IMR-90 (cell line): ENCODE measurements at regions of chr9 and their contacts with region 1.

Region 1: GRCh38 chr9:2645569-2645968 is 24.0 kb downstream of the VLDLR start:
- DNase-seq: no peak
- ATAC-seq: no peak
- H3K4me3 ChIP-seq: no peak overlapping the region
- H3K27ac ChIP-seq: no peak overlapping the region
- H3K4me1 ChIP-seq: no peaks in the 10 kb centered on the region
- H3K27me3 ChIP-seq: no peaks in the 10 kb centered on the region
- CTCF ChIP-seq: no peak
- POLR2A ChIP-seq: no peak
- RAD21 ChIP-seq: no peak

Region 2: DNA sequence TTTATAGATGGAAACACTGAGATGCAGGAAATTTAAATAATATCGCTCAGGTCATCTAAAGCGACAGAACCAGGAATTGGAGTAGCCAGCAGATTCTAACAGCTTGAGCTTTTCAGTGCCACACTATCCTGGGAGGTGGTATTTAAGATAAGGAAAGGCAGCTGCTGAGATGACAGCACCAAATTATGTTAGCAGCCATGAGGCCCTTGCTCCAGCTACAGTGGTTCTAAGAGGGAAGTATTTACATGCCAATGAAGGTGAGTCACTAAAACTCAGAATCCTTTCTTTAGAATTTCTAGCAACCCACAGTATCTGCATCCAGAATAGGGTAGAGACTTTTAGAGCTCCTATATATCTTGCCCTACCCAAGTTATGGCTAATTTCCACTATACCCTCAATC is 151.0 kb before region 1 on chr9:
- CTCF ChIA-PET with region 1: no interaction called
- POLR2A ChIA-PET with region 1: no interaction called
- dilution Hi-C with region 1: no loop called
- in situ Hi-C with region 1: no loop called
- intact Hi-C with region 1: no loop called
- DNase-seq: peak; percentile 88
- ATAC-seq: peak; percentile 94
- H3K4me3 ChIP-seq: no peak overlapping the region
- H3K27ac ChIP-seq: peak overlapping the region; percentile 76; the same call in 1 of the 2 replicates
- H3K4me1 ChIP-seq: peaks cover 12% of the 10 kb centered on the region
- H3K27me3 ChIP-seq: no peaks in the 10 kb centered on the region
- CTCF ChIP-seq: no peak
- POLR2A ChIP-seq: no peak
- RAD21 ChIP-seq: 0 out of 2 replicates have a peak, but pooled peaks have one; percentile 11

Region 3: GRCh38 chr9:2628919-2629318 is 16.6 kb before region 1 on chr9:
- CTCF ChIA-PET with region 1: interaction called, 11 read pairs
- POLR2A ChIA-PET with region 1: no interaction called
- dilution Hi-C with region 1: no loop called
- in situ Hi-C with region 1: no loop called
- intact Hi-C with region 1: no loop called
- DNase-seq: no peak
- ATAC-seq: no peak
- H3K4me3 ChIP-seq: no peak overlapping the region
- H3K27ac ChIP-seq: no peak overlapping the region
- H3K4me1 ChIP-seq: peaks cover 2% of the 10 kb centered on the region
- H3K27me3 ChIP-seq: no peaks in the 10 kb centered on the region
- CTCF ChIP-seq: no peak
- POLR2A ChIP-seq: no peak
- RAD21 ChIP-seq: no peak